GM10248 (cell line): ENCODE measurements at regions of chr17 and their contacts with region 1.

Region 1: DNA sequence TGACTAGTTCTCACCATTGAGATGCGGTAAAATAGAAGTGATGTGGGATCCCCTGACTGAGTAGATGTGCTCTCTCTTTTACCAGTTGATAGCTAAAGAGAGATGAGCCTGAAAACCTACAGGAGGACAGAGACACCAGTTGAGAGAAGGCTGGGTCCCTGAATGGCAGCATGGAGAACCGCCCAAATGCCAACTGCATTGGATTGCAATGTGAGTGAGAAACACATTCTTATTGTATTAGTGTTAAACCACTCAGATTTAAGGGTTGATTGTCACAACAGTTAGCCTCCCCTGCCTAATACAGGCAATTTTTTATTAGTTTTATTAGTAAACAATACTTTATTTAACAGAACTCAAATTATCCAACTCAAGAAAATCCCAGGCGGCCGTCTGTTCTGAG is 61.2 kb downstream of the SPACA3 start:
- DNase-seq: no peak
- CTCF ChIP-seq: no peak

Region 2: DNA sequence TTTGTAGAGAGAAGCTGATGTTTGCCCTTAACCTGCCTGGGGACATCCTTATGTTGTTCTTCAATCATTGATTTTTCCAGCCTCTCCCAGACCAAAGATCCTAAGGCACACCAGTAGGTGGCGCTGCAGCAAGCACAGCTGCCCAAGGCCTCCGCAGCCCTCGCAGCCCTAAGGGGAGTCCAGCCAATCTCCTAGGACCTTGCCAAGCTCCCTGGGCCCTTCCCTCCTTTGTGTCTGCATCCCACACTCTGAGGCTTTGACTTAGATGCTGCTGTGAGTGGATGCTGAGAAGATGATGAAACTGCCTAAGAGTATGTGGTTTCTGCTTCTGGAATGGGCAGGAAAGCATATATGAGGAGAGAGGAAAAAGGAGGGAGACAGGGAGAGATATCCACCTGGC is 14.1 kb before region 1 on chr17:
- CTCF ChIA-PET with region 1: interaction called, 15 read pairs
- POLR2A ChIA-PET with region 1: no interaction called
- DNase-seq: no peak
- CTCF ChIP-seq: peak; percentile 45